CD14-positive monocyte (primary cell): ENCODE measurements at regions of chr19 and their contacts with region 1.

Region 1: GRCh38 chr19:49877020-49877878 is at the starts of genes AKT1S1 and TBC1D17:
- DNase-seq: peak; percentile 100
- H3K4me3 ChIP-seq: peak within 1 kb of the TSS; percentile 66 to 94 (median 88)
- H3K4me3 Mint-ChIP-seq: no peak within 1 kb of the TSS
- H3K27ac ChIP-seq: peak within 1 kb of the TSS; percentile 90 to 95
- H3K27ac Mint-ChIP-seq: no peak within 1 kb of the TSS
- H3K4me1 ChIP-seq: peaks cover 25 to 28% of the 10 kb centered on the region in 2 donors
- H3K4me1 Mint-ChIP-seq: peaks cover 25% of the 10 kb centered on the region
- H3K27me3 ChIP-seq: no peaks in the 10 kb centered on the region
- H3K27me3 Mint-ChIP-seq: peaks cover 0 to 1% (median 0%) of the 10 kb centered on the region in 3 donors
- CTCF ChIP-seq: no peak
- polyA plus RNA-seq, gene AKT1S1: 5.4 to 18.2 (median 6.6) TPM
- polyA plus RNA-seq, gene TBC1D17: 3.1 to 48.2 (median 4.5) TPM

Region 2: DNA sequence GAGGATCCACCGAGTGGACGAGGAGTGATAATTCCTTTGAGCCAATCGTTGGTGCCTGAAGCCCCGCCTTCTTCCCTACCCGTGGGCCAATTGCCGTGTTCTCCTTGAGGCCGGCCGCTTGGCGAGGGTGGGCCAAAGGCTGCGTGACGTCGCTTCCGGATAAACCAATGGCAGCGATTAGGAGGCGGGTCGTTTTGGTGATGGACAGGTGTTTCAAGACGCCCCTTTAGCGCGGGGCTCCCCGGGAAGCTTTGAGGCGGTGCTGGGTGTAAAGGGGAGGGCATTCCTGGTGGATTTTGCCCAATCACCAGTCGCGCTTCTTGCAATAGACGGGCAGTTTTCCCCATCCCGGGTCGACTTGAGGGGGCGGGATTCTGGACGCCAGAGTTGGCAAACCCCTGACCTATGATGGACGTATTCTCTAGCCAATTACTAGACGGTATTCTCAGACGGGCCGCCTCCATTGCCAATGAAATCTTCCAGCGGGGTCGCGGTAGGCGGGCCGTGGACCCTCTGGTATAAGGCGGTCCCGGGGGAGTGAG is 200.5 kb before region 1 on chr19:
- intact Hi-C with region 1: loop called in 1 of 2 experiments (anchors 5 kb)
- DNase-seq: peak; percentile 99 to 100 (median 100)
- H3K4me3 ChIP-seq: peak overlapping the region; percentile 92 to 98 (median 93)
- H3K4me3 Mint-ChIP-seq: peak overlapping the region; percentile 96
- H3K27ac ChIP-seq: peak overlapping the region; percentile 91 to 98
- H3K27ac Mint-ChIP-seq: peak overlapping the region; percentile 98 to 100 (median 100)
- H3K4me1 ChIP-seq: peaks cover 29 to 38% of the 10 kb centered on the region in 2 donors
- H3K4me1 Mint-ChIP-seq: peaks cover 25% of the 10 kb centered on the region
- H3K27me3 ChIP-seq: no peaks in the 10 kb centered on the region
- H3K27me3 Mint-ChIP-seq: peaks cover 0 to 5% (median 0%) of the 10 kb centered on the region in 3 donors
- CTCF ChIP-seq: no peak

Region 3: DNA sequence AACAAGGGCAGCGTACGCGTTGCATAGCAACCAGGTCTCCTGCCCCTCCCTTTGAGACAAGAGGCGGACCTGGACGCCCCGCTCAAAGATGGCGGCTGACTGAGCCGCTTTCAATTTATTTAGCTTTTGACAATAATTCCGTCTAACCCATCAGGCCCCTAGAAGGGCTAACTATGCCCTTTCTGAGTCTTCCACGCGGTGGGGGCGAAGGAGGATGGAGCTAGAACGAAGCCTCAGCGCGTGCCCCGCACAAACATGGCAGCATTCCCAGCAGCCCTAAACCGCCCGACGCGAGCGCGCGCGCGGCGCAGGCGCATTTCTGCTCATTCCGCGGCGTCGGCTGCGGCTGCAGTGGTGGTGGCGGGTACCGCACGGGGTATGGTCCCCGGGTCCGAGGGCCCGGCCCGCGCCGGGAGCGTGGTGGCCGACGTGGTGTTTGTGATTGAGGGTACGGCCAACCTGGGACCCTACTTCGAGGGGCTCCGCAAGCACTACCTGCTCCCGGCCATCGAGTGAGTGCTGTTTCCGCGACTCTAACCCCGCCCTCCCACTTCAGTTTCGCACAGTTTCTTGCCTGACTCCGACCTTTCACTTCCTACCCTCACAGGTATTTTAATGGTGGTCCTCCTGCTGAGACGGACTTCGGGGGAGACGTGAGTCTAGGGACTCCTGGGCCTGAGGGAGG is 59.1 kb before region 1 on chr19 and contains the start of gene MED25:
- intact Hi-C with region 1: loop called in 1 of 2 experiments (anchors 2 kb)
- DNase-seq: peak; percentile 81 to 89 (median 83)
- H3K4me3 ChIP-seq: peak within 1 kb of the TSS; percentile 70 to 100 (median 89)
- H3K4me3 Mint-ChIP-seq: peak within 1 kb of the TSS; percentile 96 to 100
- H3K27ac ChIP-seq: peak within 1 kb of the TSS; percentile 75 to 93
- H3K27ac Mint-ChIP-seq: peak within 1 kb of the TSS; percentile 97 to 100 (median 99)
- H3K4me1 ChIP-seq: peaks cover 23 to 27% of the 10 kb centered on the region in 2 donors
- H3K4me1 Mint-ChIP-seq: peaks cover 22% of the 10 kb centered on the region
- H3K27me3 ChIP-seq: no peaks in the 10 kb centered on the region
- H3K27me3 Mint-ChIP-seq: peaks cover 0 to 8% (median 0%) of the 10 kb centered on the region in 3 donors
- CTCF ChIP-seq: peak; percentile 23
- polyA plus RNA-seq, gene MED25: 13.9 to 52.9 (median 18.5) TPM

Region 4: DNA sequence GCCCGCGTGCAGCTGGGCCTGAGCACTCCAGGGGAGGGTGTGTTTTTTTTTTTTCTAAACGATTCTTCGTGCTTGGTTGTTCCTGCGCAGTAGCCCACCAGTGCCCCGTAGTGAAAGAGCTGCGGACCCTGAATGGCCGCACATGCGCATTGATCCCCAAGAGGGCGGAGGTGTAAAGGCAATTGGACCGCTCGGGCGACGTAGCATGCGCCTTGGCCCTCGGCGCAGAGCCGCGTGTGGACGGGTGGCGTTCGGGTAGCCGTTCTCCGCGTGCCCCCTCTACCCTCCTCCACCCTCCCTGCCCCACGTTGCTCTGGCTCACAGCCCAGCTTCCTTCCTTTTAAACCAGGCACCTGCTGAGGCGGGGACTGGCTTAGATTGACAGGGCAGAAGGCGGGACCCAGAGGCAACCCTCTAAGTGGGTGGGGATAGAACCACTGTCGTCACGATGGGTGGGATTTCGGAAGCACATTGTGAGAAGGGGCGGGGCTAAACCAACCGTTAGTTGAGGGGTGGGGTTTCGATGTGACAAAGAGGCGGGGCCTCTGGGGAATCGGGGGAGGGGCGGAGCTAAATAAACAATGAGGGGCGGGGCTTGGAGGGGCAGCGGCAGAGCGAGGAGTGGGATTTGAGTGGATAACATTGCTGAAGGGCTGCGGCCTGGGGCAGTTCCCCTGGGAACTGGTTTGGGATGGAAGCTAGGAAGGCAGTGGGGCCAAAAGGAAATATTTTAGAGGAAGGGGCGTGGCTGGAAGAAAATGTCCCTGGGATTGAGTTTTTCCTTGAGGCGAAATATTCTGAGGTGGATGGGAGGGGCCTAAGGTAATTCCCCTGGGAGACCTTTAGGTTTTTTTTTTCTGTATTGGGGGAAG is 52.6 kb after region 1 on chr19:
- intact Hi-C with region 1: loop called in 1 of 2 experiments (anchors 2 kb)
- DNase-seq: peak; percentile 88 to 96 (median 96)
- H3K4me3 ChIP-seq: peak overlapping the region; percentile 82 to 91 (median 83)
- H3K4me3 Mint-ChIP-seq: peak overlapping the region; percentile 90 to 97
- H3K27ac ChIP-seq: peak overlapping the region; percentile 88 to 95
- H3K27ac Mint-ChIP-seq: peak overlapping the region; percentile 96 to 100 (median 97)
- H3K4me1 ChIP-seq: peaks cover 33 to 49% of the 10 kb centered on the region in 2 donors
- H3K4me1 Mint-ChIP-seq: peaks cover 45% of the 10 kb centered on the region
- H3K27me3 ChIP-seq: no peaks in the 10 kb centered on the region
- H3K27me3 Mint-ChIP-seq: peaks cover 0 to 6% (median 5%) of the 10 kb centered on the region in 3 donors
- CTCF ChIP-seq: no peak

Region 5: GRCh38 chr19:50025024-50025789 is 148.0 kb after region 1 on chr19 and contains the start of gene VRK3:
- intact Hi-C with region 1: loop called in 1 of 2 experiments (anchors 2 kb)
- DNase-seq: peak; percentile 100
- H3K4me3 ChIP-seq: peak within 1 kb of the TSS; percentile 76 to 97 (median 82)
- H3K4me3 Mint-ChIP-seq: peak within 1 kb of the TSS; percentile 94 to 98
- H3K27ac ChIP-seq: peak within 1 kb of the TSS; percentile 73 to 91
- H3K27ac Mint-ChIP-seq: peak within 1 kb of the TSS; percentile 96 to 100 (median 99)
- H3K4me1 ChIP-seq: peaks cover 23 to 31% of the 10 kb centered on the region in 2 donors
- H3K4me1 Mint-ChIP-seq: peaks cover 40% of the 10 kb centered on the region
- H3K27me3 ChIP-seq: no peaks in the 10 kb centered on the region
- H3K27me3 Mint-ChIP-seq: peaks cover 0 to 8% (median 5%) of the 10 kb centered on the region in 3 donors
- CTCF ChIP-seq: peak; percentile 12
- polyA plus RNA-seq, gene VRK3: 42.8 to 47.3 (median 46.8) TPM